Activated naive CD8-positive, alpha-beta T cell treated with anti-CD3 and anti-CD28 coated beads, Interleukin-2, amount 10 ng/mL, durations not matched to agents 7 days and 5 days (primary cell): ENCODE measurements at regions of chr9 and their contacts with region 1.

Region 1: GRCh38 chr9:112680731-112681402 is 37.0 kb downstream of the INIP start:
- DNase-seq: no peak
- ATAC-seq: no peak
- H3K4me3 Mint-ChIP-seq: no peak overlapping the region
- H3K27ac Mint-ChIP-seq: no peak overlapping the region
- H3K4me1 Mint-ChIP-seq: peaks cover 6% of the 10 kb centered on the region
- H3K27me3 Mint-ChIP-seq: no peaks in the 10 kb centered on the region

Region 2: GRCh38 chr9:112694706-112695555 is 14.1 kb after region 1 on chr9:
- POLR2A ChIA-PET with region 1: interaction called, 11 read pairs
- DNase-seq: no peak
- ATAC-seq: no peak
- H3K4me3 Mint-ChIP-seq: no peak overlapping the region
- H3K27ac Mint-ChIP-seq: no peak overlapping the region
- H3K4me1 Mint-ChIP-seq: peaks cover 27% of the 10 kb centered on the region
- H3K27me3 Mint-ChIP-seq: no peaks in the 10 kb centered on the region